ENCODE measurements at regions of chr7 and their contacts with region 1.

Region 1: DNA sequence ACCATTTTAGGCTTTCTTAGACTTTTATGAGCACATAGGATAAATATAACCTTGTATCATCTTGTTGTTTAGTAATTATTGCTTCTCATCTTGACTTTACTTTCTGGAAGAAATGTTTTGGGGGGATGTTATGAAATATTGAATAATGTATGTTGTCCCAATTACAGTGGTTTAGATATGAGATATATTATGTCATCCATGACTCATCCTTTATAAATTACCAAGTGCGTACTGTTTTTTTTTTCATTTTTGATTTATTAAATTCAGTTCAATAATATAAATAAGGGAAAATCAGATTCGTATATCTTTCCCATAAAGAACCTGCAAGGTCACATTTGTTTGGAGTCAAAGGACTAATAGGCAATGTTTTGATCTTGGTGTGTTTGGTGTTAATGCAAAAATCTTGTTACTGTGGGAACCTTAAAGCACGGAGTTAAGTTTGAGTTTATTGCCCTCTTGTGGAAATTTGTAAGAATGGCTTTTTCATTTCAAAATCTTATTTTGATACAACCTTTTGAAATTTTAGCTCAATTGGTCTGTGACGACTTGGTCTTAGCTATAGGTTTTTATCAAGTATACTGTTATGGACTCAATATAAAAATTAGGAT is 108.6 kb downstream of the SRI start:
- DNase-seq: peak; percentile 35
- ATAC-seq: no peak
- H3K4me3 ChIP-seq: no peak overlapping the region
- H3K27ac ChIP-seq: no peak overlapping the region
- H3K4me1 ChIP-seq: 0 out of 2 replicates have a peak, but pooled peaks cover 2% of the 10 kb centered on the region
- H3K27me3 ChIP-seq: no peaks in the 10 kb centered on the region
- CTCF ChIP-seq: peak; percentile 59
- EP300 ChIP-seq: no peak
- POLR2A ChIP-seq: no peak
- RAD21 ChIP-seq: peak; percentile 59; the same call in 1 of the 2 replicates

Region 2: GRCh38 chr7:87797798-87798403 is 313.3 kb before region 1 on chr7:
- CTCF ChIA-PET with region 1: interaction called, 9 read pairs
- POLR2A ChIA-PET with region 1: no interaction called
- in situ Hi-C with region 1: loop called (anchors 10 kb)
- intact Hi-C with region 1: loop called (anchors 1 kb)
- DNase-seq: peak; percentile 48
- ATAC-seq: peak; percentile 80
- H3K4me3 ChIP-seq: no peak overlapping the region
- H3K27ac ChIP-seq: no peak overlapping the region
- H3K4me1 ChIP-seq: no peaks in the 10 kb centered on the region
- H3K27me3 ChIP-seq: no peaks in the 10 kb centered on the region
- CTCF ChIP-seq: peak; percentile 82
- EP300 ChIP-seq: no peak
- POLR2A ChIP-seq: no peak
- RAD21 ChIP-seq: peak; percentile 45; the same call in 1 of the 2 replicates

Region 3: DNA sequence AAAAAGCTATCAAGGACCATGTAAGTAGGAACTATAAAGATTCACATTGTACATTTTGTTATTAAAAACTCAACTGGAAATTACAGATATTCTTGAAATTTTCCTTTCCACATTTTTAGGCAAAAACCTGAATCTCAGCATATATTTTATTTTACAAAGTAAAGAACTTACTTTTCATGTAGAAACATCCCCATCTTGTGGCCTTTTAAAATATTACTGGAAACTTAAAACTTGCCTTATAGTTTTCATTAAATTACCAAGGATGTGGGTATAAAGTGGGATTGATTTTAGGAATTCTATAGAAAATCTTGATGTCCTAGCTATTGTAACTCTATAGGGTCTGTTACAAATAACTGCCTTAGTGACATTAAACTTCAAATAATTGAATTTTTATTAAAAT is 224.4 kb before region 1 on chr7:
- CTCF ChIA-PET with region 1: no interaction called
- POLR2A ChIA-PET with region 1: no interaction called
- in situ Hi-C with region 1: no loop called
- intact Hi-C with region 1: loop called (anchors 1 kb)
- DNase-seq: peak; percentile 20
- ATAC-seq: no peak
- H3K4me3 ChIP-seq: no peak overlapping the region
- H3K27ac ChIP-seq: no peak overlapping the region
- H3K4me1 ChIP-seq: 0 out of 2 replicates have a peak, but pooled peaks cover under 1% of the 10 kb centered on the region
- H3K27me3 ChIP-seq: no peaks in the 10 kb centered on the region
- CTCF ChIP-seq: 0 out of 2 replicates have a peak, but pooled peaks have one; percentile 10
- EP300 ChIP-seq: no peak
- POLR2A ChIP-seq: no peak
- RAD21 ChIP-seq: no peak

Region 4: DNA sequence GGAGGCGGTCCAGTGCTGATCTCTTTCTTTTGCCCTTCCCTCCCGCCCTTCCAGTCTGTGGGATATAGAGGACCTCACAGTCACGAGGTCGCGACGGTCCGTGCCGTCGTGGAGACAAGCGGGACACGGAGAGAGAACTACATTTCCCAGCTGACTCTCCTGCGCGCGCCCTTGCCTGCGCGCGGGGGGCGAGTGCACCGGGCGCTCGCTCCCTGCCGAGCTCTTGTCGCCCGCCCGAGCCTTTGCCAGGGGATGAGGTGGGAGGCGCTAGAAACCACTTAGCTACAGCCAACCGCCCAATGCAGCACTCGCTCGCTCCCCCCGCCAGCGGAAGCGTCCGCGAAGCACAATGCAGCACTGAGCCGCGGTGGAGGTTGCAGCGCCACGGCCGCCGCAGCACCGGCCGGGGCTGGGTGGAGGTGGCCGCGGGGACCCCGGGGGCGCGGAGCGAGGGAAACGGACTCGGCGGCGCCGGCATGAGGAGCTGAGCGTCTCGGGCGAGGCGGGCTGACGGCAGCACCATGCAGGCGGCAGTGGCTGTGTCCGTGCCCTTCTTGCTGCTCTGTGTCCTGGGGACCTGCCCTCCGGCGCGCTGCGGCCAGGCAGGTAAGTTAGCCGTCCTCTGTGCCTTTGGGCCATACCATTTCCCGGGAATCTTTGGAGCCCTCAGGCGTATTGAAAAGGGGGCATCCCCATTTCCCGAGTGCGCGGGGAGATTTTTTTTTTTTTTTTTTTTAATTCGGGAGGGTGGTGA is 177.1 kb before region 1 on chr7 and contains the start of gene ADAM22:
- CTCF ChIA-PET with region 1: no interaction called
- POLR2A ChIA-PET with region 1: no interaction called
- in situ Hi-C with region 1: no loop called
- intact Hi-C with region 1: loop called (anchors 1 kb)
- DNase-seq: peak; percentile 78
- ATAC-seq: peak; percentile 99
- H3K4me3 ChIP-seq: peak within 1 kb of the TSS; percentile 64 to 77 (median 70)
- H3K27ac ChIP-seq: no peak within 1 kb of the TSS
- H3K4me1 ChIP-seq: peaks cover 27% of the 10 kb centered on the region
- H3K27me3 ChIP-seq: no peaks in the 10 kb centered on the region; a peak in 1 of 5 replicates
- CTCF ChIP-seq: peak; percentile 72
- EP300 ChIP-seq: no peak
- POLR2A ChIP-seq: peak; percentile 76 to 79
- RAD21 ChIP-seq: peak; percentile 48
- total RNA-seq, gene ADAM22: 2.9 and 6.7 TPM in 2 replicates

Measured in HepG2 (cell line).